T-cell (primary cell): ENCODE measurements at regions of chr6 and their contacts with region 1.

Region 1: GRCh38 chr6:36423101-36423824 is 19.4 kb downstream of the PXT1 start:
- DNase-seq: peak; percentile 94 to 100 (median 98)
- ATAC-seq: peak; percentile 96 to 99 (median 98)
- H3K4me3 ChIP-seq: peak overlapping the region; percentile 81 to 92
- H3K4me3 Mint-ChIP-seq: peak overlapping the region; percentile 92 to 94 (median 93)
- H3K27ac ChIP-seq: peak overlapping the region; percentile 78
- H3K27ac Mint-ChIP-seq: peak overlapping the region; percentile 96 to 97
- H3K4me1 ChIP-seq: peaks cover 4 to 13% of the 10 kb centered on the region in 2 experiments
- H3K4me1 Mint-ChIP-seq: peaks cover 16 to 18% (median 17%) of the 10 kb centered on the region in 3 donors
- H3K27me3 ChIP-seq: peaks cover 0 to 3% of the 10 kb centered on the region in 2 experiments
- H3K27me3 Mint-ChIP-seq: no peaks in the 10 kb centered on the region

Region 2: DNA sequence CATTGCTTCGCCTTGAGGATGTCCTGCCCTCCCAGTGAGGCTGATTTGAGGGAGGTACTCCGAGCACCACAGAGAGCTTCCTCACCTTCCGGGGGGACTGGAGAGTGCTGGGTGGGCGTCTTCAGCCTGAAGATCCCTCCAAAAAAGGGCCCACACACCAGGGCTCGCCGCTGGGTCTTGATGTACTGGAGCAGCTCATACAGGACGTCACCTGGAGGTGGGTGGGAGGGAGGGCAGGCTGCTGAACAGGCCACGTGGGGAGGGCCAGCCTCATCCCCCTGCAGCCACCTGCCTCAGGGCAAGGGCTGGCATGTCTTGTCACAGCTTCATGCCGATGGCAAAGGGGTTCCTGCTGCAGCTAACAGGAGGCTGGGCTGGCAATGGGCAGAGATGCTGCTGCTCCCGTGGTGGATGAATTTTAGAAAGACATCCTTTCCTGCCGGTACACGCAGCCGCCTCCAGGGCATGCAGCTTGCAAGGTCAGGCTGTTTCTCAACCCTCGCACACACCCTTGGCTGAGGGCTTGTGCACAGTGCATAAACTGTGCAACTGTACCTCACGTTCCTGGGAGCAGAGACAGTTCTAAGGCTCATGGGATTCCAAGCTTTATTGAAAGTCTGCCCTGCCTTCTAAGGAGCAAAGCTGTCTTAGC is 49.8 kb before region 1 on chr6:
- CTCF ChIA-PET with region 1: no interaction called
- POLR2A ChIA-PET with region 1: no interaction called
- DNase-seq: no peak
- ATAC-seq: no peak
- H3K4me3 ChIP-seq: no peak overlapping the region
- H3K4me3 Mint-ChIP-seq: no peak overlapping the region
- H3K27ac ChIP-seq: no peak overlapping the region
- H3K27ac Mint-ChIP-seq: no peak overlapping the region
- H3K4me1 ChIP-seq: no peaks in the 10 kb centered on the region
- H3K4me1 Mint-ChIP-seq: peaks cover 0 to 5% (median 0%) of the 10 kb centered on the region in 3 donors
- H3K27me3 ChIP-seq: peaks cover 0 to 6% of the 10 kb centered on the region in 2 experiments
- H3K27me3 Mint-ChIP-seq: peaks cover 0 to 14% of the 10 kb centered on the region in 2 donors

Region 3: GRCh38 chr6:36441307-36441894 is 18.1 kb after region 1 on chr6:
- CTCF ChIA-PET with region 1: interaction called in 1 of 2 experiments, 11 read pairs
- POLR2A ChIA-PET with region 1: interaction called in 1 of 2 experiments, 4 read pairs
- DNase-seq: peak; percentile 41 to 88 (median 73)
- ATAC-seq: peak; percentile 48 to 77 (median 58)
- H3K4me3 ChIP-seq: no peak overlapping the region
- H3K4me3 Mint-ChIP-seq: peak overlapping the region; percentile 44 to 64 (median 53)
- H3K27ac ChIP-seq: peak overlapping the region; percentile 89
- H3K27ac Mint-ChIP-seq: peak overlapping the region; percentile 89 to 93
- H3K4me1 ChIP-seq: peaks cover 18 to 31% of the 10 kb centered on the region in 2 experiments
- H3K4me1 Mint-ChIP-seq: peaks cover 39 to 47% (median 43%) of the 10 kb centered on the region in 3 donors
- H3K27me3 ChIP-seq: no peaks in the 10 kb centered on the region
- H3K27me3 Mint-ChIP-seq: no peaks in the 10 kb centered on the region